ENCODE measurements at regions of chr14 and their contacts with region 1.

Region 1: GRCh38 chr14:103973354-103973753 is 31.0 kb upstream of the RD3L start:
- DNase-seq: no peak
- H3K4me3 ChIP-seq: no peak overlapping the region
- H3K27ac ChIP-seq: no peak overlapping the region
- H3K4me1 ChIP-seq: no peaks in the 10 kb centered on the region
- H3K27me3 ChIP-seq: no peaks in the 10 kb centered on the region
- CTCF ChIP-seq: no peak

Region 2: GRCh38 chr14:103518422-103519042 is 454.8 kb before region 1 on chr14:
- CTCF ChIA-PET with region 1: no interaction called
- POLR2A ChIA-PET with region 1: no interaction called
- intact Hi-C with region 1: no loop called
- DNase-seq: peak; percentile 54 to 80
- H3K4me3 ChIP-seq: no peak overlapping the region
- H3K27ac ChIP-seq: no peak overlapping the region
- H3K4me1 ChIP-seq: peaks cover 11% of the 10 kb centered on the region
- H3K27me3 ChIP-seq: no peaks in the 10 kb centered on the region
- CTCF ChIP-seq: peak; percentile 99

Region 3: GRCh38 chr14:103920981-103921854 is 52.1 kb before region 1 on chr14:
- CTCF ChIA-PET with region 1: no interaction called
- POLR2A ChIA-PET with region 1: no interaction called
- intact Hi-C with region 1: loop called (anchors 5 kb)
- DNase-seq: peak; percentile 78 to 96
- H3K4me3 ChIP-seq: peak overlapping the region; percentile 100
- H3K27ac ChIP-seq: peak overlapping the region; percentile 90
- H3K4me1 ChIP-seq: peaks cover 14% of the 10 kb centered on the region
- H3K27me3 ChIP-seq: no peaks in the 10 kb centered on the region
- CTCF ChIP-seq: peak; percentile 92

Region 4: GRCh38 chr14:103946975-103947374 is 26.4 kb before region 1 on chr14:
- CTCF ChIA-PET with region 1: no interaction called
- POLR2A ChIA-PET with region 1: interaction called, 22 read pairs
- intact Hi-C with region 1: no loop called
- DNase-seq: no peak
- H3K4me3 ChIP-seq: no peak overlapping the region
- H3K27ac ChIP-seq: no peak overlapping the region
- H3K4me1 ChIP-seq: no peaks in the 10 kb centered on the region
- H3K27me3 ChIP-seq: peaks cover 2% of the 10 kb centered on the region; the same call in 1 of the 2 replicates
- CTCF ChIP-seq: no peak